ENCODE measurements at regions of chr16 and their contacts with region 1.

Region 1: DNA sequence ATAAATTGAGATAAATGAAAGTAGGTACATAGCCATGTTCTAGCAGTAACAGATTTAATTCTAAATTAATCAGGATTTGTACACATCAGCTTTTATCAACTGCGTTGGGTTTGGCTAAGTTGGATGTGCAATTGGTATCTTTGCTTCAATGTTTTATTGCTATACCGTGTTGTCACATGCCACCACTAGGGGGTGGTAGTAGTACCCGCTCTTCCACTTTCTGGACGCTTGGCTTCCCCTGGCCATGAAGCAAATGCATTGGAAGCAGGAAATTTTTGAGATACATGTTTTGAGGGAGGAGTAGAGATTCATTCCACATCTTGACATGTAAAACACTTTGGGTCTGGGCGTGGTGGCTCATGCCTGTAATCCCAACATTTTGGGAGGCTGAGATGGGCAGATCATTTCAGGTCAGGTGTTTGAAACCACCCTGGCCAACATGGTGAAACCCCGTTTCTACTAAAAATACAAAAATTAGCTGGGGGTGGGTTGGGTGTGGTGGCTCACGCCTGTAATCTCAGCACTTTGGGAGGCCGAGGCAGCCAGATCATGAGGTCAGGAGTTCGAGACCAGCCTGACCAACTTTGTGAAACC is 58.6 kb downstream of the EMP2 start:
- DNase-seq: peak; percentile 67 to 70
- H3K4me3 ChIP-seq: no peak overlapping the region
- H3K27ac ChIP-seq: no peak overlapping the region
- H3K4me1 ChIP-seq: peaks cover 27% of the 10 kb centered on the region
- H3K27me3 ChIP-seq: no peaks in the 10 kb centered on the region
- CTCF ChIP-seq: peak; percentile 89

Region 2: DNA sequence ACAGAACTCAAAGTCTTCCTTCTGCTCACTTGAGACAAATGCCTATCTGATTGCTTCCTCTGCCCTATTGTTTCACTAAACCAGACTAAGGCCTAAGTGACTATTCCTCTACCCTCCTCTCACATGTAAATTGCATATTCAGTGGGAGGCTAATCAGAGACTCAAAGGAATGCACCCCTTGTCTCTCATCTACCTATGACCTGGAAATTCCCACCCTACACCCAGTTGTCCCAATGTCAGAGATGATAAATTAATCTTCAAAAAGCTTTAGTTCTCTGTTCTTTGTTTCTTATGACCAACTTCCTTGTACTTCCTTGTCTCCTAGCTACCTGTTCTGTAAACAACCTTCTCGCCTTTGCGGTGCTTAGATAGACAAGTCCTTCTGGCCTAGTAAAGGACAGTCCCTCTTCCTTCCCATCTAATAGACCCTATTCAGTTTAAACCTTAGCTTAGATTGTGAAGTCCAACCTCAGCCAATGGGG is 17.3 kb before region 1 on chr16:
- CTCF ChIA-PET with region 1: no interaction called
- POLR2A ChIA-PET with region 1: interaction called, 13 read pairs
- intact Hi-C with region 1: no loop called
- DNase-seq: no peak
- H3K4me3 ChIP-seq: no peak overlapping the region
- H3K27ac ChIP-seq: no peak overlapping the region
- H3K4me1 ChIP-seq: no peaks in the 10 kb centered on the region
- H3K27me3 ChIP-seq: no peaks in the 10 kb centered on the region
- CTCF ChIP-seq: no peak

Region 3: DNA sequence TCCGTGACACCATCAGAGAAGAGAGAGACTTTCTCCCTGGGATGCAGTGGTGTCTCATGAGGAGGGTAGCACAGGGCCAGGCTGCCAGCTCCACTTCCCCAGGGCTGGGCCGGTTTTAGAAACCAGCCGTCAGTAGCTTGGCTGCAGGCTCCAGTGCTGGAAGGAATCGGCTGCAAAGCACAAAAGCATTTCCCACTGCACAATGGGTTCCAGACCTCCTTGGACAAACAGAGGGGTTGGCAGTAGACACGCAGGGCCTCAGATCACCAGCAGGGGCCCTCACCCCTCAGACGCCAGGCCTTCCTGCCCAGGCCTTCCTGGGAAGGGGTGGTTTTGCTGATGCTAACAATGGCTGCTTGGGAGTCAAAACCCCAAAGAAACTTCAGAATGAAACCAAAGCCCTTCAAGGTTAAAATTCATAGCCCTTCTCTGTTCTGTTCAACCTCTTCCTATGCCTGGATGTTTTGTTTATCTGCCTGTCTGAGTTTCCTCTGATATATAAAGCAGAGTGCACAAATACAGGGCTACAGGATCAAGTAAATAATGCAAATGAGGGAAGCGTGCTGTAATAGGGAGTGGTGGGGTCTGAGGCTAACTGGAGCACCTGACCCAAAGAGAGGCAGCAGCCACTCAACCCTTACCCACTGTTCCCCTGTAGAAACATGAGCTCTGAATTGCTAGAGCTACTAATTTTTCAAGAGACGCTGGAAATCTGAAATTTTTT is 146.7 kb after region 1 on chr16:
- CTCF ChIA-PET with region 1: no interaction called
- POLR2A ChIA-PET with region 1: no interaction called
- intact Hi-C with region 1: loop called (anchors 5 kb)
- DNase-seq: peak in 1 of 2 experiments; percentile 38
- H3K4me3 ChIP-seq: no peak overlapping the region
- H3K27ac ChIP-seq: no peak overlapping the region
- H3K4me1 ChIP-seq: no peaks in the 10 kb centered on the region
- H3K27me3 ChIP-seq: no peaks in the 10 kb centered on the region
- CTCF ChIP-seq: peak; percentile 66

Region 4: DNA sequence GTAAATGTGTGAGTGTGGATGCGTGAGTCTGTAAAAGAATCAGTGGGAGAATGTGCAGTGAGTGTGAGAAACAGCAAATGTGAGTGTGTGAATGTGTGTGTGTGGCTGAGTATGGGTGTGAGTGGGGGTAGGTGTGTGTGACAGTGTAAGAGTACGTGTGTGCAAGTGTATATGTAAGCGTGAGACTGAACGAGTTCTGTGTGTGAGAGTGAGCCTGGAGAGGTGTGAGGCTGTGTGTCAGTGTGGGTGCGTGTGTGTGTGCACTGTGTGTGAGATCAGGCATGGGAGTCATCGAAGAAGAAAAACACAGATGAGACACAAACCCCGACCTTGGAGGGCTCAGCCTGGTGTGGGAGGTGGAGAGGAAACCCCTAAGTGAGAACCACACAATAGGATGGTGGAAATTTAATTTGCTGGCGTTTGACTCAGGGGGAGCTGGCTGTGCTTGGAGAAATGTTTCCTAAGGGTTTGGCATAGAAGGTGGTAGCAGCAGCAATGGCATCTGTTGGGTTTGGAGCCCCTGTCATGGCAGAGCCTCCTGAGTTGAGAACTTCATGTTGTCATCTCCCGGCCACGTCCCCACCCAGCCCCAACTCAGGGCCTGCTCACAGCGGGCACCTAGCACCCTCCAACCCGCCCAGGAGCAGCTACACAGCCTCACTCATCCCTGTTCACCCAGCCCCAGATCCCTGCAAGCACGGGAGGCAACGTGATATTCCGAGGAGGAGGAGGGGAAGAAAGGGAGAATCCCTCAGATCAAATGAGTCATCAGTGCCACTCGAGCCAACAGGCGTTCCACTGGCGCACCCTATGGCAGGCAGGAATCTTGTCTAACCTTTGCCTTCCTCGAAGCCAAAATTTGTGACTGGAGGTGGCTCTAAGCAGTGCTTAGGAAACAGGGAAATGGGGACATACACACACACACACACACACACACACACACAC is 207.6 kb after region 1 on chr16:
- CTCF ChIA-PET with region 1: interaction called, 8 read pairs
- POLR2A ChIA-PET with region 1: no interaction called
- intact Hi-C with region 1: loop called (anchors 1 kb)
- DNase-seq: peak; percentile 84 to 87
- H3K4me3 ChIP-seq: no peak overlapping the region
- H3K27ac ChIP-seq: no peak overlapping the region
- H3K4me1 ChIP-seq: peaks cover 18% of the 10 kb centered on the region
- H3K27me3 ChIP-seq: no peaks in the 10 kb centered on the region
- CTCF ChIP-seq: no peak; the same call in 1 of the 2 replicates

Region 5: GRCh38 chr16:10743610-10744393 is 222.0 kb after region 1 on chr16 and contains the start of gene NUBP1:
- CTCF ChIA-PET with region 1: interaction called, 11 read pairs
- POLR2A ChIA-PET with region 1: no interaction called
- intact Hi-C with region 1: no loop called
- DNase-seq: peak; percentile 93 to 99
- H3K4me3 ChIP-seq: peak within 1 kb of the TSS; percentile 69
- H3K27ac ChIP-seq: peak within 1 kb of the TSS; percentile 88
- H3K4me1 ChIP-seq: peaks cover 14% of the 10 kb centered on the region
- H3K27me3 ChIP-seq: no peaks in the 10 kb centered on the region
- CTCF ChIP-seq: no peak
- total RNA-seq, gene NUBP1: 21.0 and 28.9 TPM in 2 replicates

Measured in PC-9 (cell line).